A549 (cell line): ENCODE measurements at regions of chr1 and their contacts with region 1.

Region 1: GRCh38 chr1:63316984-63317816 is 5.2 kb upstream of the FOXD3 start:
- DNase-seq: peak; percentile 71 to 91
- ATAC-seq: peak; percentile 97 to 98
- H3K4me3 ChIP-seq: peak overlapping the region; percentile 74
- H3K27ac ChIP-seq: peak overlapping the region; percentile 87 to 90
- H3K4me1 ChIP-seq: peaks cover 4% of the 10 kb centered on the region; the same call in 1 of the 3 replicates
- CTCF ChIP-seq: peak; percentile 55
- EP300 ChIP-seq: no peak
- POLR2A ChIP-seq: peak; percentile 25; the same call in 1 of the 2 replicates
- RAD21 ChIP-seq: peak; percentile 50 to 52

Region 2: GRCh38 chr1:63327417-63328139 is 10.4 kb after region 1 on chr1:
- CTCF ChIA-PET with region 1: interaction called, 17 read pairs
- POLR2A ChIA-PET with region 1: no interaction called
- DNase-seq: peak; percentile 68 to 72
- ATAC-seq: peak; percentile 66 to 89
- H3K4me3 ChIP-seq: no peak overlapping the region
- H3K27ac ChIP-seq: no peak overlapping the region
- H3K4me1 ChIP-seq: no peaks in the 10 kb centered on the region
- CTCF ChIP-seq: peak; percentile 64
- EP300 ChIP-seq: no peak
- POLR2A ChIP-seq: no peak
- RAD21 ChIP-seq: peak; percentile 62 to 63

Region 3: DNA sequence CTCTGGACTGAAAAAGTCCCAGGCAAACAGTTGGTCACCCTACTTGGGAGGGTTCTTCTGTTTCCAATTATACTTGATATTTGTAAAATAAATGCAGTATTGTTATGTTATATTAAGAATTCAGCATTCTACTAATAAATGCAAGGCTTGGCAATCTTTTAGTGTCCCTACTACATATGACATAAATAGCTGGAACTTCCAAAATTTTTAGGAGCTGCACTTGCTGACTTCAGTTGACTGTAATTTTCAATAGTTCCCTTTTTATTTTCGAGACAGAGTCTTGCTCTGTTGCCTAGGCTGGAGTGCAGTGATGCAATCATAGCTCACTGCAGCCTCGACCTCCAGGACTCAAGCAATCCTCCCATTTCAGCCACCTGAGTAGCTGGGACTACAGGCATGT is 25.2 kb after region 1 on chr1:
- CTCF ChIA-PET with region 1: no interaction called
- POLR2A ChIA-PET with region 1: no interaction called
- DNase-seq: no peak
- ATAC-seq: no peak
- H3K4me3 ChIP-seq: no peak overlapping the region
- H3K27ac ChIP-seq: no peak overlapping the region
- H3K4me1 ChIP-seq: no peaks in the 10 kb centered on the region
- CTCF ChIP-seq: no peak
- EP300 ChIP-seq: no peak
- POLR2A ChIP-seq: no peak
- RAD21 ChIP-seq: no peak